Activated CD4-positive, alpha-beta T cell treated with anti-CD3 and anti-CD28 coated beads for 36 hours (primary cell): ENCODE measurements at regions of chr6 and their contacts with region 1.

Region 1: DNA sequence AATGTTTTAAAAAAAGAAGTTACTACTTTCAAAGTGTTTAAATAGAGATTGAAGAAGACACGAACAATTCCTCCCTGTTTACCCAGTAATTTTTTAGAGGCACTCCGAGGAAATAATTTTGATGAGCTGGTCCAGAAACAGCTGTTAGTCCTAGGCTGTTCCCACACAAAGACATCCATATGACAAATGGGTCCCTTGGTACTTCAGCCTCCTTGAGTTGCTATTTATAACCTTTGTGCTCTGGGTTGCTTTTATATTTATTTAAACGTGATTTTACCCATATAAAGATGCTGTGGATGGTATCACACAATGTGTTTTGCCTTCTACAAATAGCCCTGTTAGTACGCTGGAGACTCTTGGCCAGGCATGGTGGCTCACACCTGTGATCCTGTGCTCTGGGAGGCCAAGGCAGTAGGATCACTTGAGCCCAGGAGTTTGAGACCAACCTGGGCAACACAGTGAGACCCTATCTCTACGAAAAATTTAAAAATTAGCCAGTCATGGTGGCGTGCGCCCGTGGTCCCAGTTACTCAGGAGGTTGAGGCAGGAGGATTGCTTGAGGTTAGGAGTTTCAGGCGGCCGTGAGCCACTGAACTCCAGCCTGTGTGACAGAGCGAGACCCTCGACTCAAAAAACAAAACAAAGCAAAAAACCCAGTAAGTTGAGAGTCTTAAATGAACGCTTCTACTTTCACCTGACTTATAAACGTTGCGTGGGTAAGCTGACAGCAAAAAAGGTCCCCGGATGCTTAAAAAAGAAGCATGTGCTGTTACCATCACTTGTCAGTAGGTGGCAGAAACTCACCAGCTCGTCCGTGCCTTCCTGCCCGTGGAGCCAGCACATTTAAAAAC is 56.9 kb upstream of the ARMH2 start:
- DNase-seq: peak; percentile 79
- ATAC-seq: peak; percentile 61
- H3K4me3 Mint-ChIP-seq: peak overlapping the region; percentile 46
- H3K27ac Mint-ChIP-seq: peak overlapping the region; percentile 90
- H3K4me1 Mint-ChIP-seq: peaks cover 52% of the 10 kb centered on the region
- H3K27me3 Mint-ChIP-seq: no peaks in the 10 kb centered on the region

Region 2: DNA sequence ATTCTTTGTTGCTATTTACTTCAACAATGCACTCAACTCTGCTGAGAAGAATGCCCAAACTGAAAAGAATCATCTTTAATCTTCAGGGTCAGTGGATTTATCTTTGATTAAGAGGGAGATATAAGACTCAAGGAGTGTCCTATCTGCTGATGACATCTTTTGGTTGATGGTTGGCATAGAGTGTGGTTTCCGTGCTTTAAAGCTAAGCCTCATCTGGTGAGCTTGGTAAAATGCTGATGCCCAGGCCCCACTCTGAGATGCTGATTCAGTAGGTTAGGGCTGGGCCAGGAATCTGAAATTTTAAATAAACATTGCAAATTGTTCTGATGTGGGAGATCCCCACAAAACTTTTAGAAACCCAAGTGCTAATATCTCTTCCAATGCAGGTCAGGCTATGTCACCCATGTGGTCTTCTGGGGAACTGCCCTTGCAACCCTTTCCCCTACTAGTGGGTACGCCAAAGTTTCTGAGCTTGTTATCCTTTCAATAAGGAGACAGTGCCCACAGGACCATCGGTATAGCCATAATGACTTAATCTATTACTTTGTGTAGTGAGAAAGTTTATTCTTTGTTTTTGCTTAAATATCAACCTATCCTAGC is 11.6 kb after region 1 on chr6:
- CTCF ChIA-PET with region 1: interaction called, 37 read pairs
- POLR2A ChIA-PET with region 1: no interaction called
- intact Hi-C with region 1: no loop called
- DNase-seq: no peak
- ATAC-seq: peak; percentile 43
- H3K4me3 Mint-ChIP-seq: no peak overlapping the region
- H3K27ac Mint-ChIP-seq: peak overlapping the region; percentile 74
- H3K4me1 Mint-ChIP-seq: peaks cover 69% of the 10 kb centered on the region
- H3K27me3 Mint-ChIP-seq: no peaks in the 10 kb centered on the region

Region 3: DNA sequence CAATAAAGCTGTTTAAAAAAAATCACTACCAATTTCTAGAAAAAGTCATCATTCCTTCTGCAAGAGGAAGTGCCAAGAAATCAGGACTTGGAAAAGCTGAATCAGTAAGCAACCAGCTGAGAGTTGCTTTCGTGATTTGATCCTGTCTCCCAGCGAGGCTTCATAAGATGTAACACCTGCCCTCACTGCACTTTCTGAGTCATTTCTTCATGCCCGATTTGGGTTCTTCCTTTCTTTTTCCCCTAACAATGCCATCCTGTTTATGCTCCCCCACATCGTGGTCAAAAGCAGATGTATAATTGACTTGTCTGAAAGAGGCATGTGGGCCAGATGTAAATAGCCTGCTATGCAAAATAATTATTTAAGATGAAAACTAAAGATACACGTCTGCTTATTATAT is 28.0 kb after region 1 on chr6:
- CTCF ChIA-PET with region 1: interaction called, 16 read pairs
- POLR2A ChIA-PET with region 1: no interaction called
- intact Hi-C with region 1: loop called (anchors 1 kb)
- DNase-seq: peak; percentile 69
- ATAC-seq: peak; percentile 85
- H3K4me3 Mint-ChIP-seq: peak overlapping the region; percentile 72
- H3K27ac Mint-ChIP-seq: peak overlapping the region; percentile 100
- H3K4me1 Mint-ChIP-seq: peaks cover 88% of the 10 kb centered on the region
- H3K27me3 Mint-ChIP-seq: no peaks in the 10 kb centered on the region

Region 4: DNA sequence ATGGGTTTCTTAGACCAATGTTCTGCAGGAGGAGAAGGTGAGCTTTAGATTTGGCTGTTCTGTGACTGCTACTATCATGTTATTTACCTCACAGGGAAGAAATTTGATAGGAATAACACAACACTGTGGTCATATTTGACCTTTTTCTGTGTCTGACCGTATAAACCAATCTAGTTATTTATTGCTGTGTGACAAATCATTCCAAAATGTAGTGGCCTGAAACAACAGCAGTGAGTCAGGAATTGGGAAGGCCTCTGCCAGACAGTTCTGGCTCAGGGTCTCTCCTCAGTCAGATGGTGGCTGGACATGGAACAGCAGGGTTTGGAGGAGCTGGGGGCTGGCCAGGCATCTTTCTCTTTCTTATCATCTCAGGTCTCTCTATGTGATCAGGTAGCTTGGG is 47.2 kb after region 1 on chr6:
- CTCF ChIA-PET with region 1: interaction called, 10 read pairs
- POLR2A ChIA-PET with region 1: interaction called, 5 read pairs
- intact Hi-C with region 1: no loop called
- DNase-seq: no peak
- ATAC-seq: no peak
- H3K4me3 Mint-ChIP-seq: no peak overlapping the region
- H3K27ac Mint-ChIP-seq: peak overlapping the region; percentile 78
- H3K4me1 Mint-ChIP-seq: peaks cover 92% of the 10 kb centered on the region
- H3K27me3 Mint-ChIP-seq: no peaks in the 10 kb centered on the region

Region 5: DNA sequence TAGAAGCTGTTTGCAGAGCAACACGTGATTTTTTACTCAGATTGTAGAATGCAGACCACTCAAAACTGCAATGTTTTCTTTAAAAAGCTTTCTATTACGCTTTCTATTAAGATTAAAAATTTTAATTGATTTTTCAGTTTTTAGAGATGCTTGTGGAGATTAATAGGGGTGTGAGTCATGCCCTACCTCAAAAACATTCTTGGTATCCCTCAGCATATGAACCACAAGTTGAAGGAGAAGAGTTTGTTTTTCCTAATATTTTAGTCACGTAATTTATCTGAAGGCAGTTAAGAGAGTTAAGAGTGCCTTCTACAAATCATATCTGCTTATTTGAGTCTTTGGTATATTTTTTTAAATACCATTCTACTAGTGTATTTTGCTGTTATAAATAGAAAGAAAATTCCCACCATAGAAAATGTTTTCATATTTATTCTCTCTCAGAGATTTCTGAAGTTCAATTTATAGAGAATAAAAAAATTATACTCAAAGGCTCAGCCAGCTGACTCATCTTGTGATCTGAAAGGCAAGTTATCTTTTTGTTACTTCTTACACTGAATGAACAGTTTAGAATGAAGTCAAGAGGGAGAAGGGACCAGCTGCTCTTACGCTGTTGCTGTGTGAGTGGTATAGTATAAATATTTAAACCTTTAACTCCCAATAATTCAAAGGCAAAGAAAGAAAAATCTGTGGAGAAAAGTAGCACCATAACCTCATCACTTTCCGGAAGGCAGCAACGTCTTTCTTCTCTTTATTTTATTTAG is 72.5 kb after region 1 on chr6:
- CTCF ChIA-PET with region 1: interaction called, 102 read pairs
- POLR2A ChIA-PET with region 1: interaction called, 5 read pairs
- intact Hi-C with region 1: loop called (anchors 1 to 2 kb)
- DNase-seq: no peak
- ATAC-seq: peak; percentile 15
- H3K4me3 Mint-ChIP-seq: peak overlapping the region; percentile 84
- H3K27ac Mint-ChIP-seq: peak overlapping the region; percentile 95
- H3K4me1 Mint-ChIP-seq: peaks cover 90% of the 10 kb centered on the region
- H3K27me3 Mint-ChIP-seq: no peaks in the 10 kb centered on the region

Region 6: DNA sequence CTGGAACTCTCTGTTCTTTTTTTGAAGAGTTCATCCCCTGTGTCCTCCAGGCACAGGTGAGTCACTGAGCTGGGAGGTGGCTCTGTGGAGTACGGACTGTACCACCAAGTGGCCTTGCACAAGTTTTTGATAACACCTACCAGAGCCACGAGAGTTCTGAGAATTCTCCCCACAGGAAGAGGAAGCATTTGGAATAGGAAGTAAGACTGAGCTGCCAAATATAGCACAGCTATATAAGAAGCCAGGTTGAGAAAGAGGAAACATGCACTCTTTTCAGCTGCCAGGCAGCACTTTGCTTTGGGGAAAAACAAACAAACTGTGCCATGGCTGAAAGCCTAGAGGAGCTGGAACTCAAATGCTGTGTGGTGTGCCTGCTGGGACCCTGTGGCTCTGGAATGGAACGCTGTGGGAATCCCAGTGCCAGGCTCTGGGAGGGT is 151.0 kb after region 1 on chr6:
- CTCF ChIA-PET with region 1: interaction called, 32 read pairs
- POLR2A ChIA-PET with region 1: no interaction called
- intact Hi-C with region 1: no loop called
- DNase-seq: peak; percentile 62
- ATAC-seq: peak; percentile 58
- H3K4me3 Mint-ChIP-seq: peak overlapping the region; percentile 32
- H3K27ac Mint-ChIP-seq: peak overlapping the region; percentile 79
- H3K4me1 Mint-ChIP-seq: peaks cover 83% of the 10 kb centered on the region
- H3K27me3 Mint-ChIP-seq: no peaks in the 10 kb centered on the region

Region 7: DNA sequence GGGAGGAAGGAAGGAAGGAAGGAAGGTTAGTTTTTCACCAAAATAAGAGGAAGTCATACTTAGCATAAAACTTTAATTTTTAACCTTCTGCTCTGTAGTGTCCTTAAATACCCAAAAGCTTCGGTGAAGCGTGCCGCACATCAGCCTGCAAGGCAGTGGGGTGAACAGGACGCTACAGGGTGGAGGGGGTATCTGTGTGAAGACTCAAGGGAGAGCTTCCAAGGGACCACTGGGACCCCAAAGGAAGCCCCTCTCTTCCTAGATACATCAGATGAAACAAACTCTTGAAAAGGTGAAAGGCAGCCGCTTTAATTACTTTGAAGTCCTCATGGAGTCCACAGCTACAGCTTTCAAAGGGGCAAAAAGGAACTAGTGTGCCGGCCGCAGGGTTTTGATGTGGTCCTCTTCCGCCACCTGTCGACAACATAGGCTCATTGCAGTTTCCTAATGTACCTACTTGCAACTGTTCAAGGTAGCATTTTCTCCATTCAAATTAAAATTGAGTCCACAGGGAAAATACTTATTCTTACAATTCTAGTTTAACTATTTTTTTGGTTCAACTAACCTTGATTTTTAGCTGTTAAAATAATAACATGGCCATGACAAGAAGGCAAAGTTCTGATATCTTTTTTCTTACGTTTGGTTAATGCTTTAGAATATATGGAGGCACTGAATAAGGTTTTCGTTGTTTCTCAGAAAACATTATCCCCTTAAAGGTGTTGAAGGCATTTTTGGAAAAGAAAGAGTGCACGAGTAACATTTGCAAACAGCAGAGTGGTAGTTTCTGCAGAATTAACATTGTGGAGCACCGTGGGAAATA is 215.1 kb after region 1 on chr6:
- CTCF ChIA-PET with region 1: interaction called, 31 read pairs
- POLR2A ChIA-PET with region 1: no interaction called
- intact Hi-C with region 1: loop called (anchors 1 kb)
- DNase-seq: peak; percentile 88
- ATAC-seq: peak; percentile 94
- H3K4me3 Mint-ChIP-seq: no peak overlapping the region
- H3K27ac Mint-ChIP-seq: peak overlapping the region; percentile 47
- H3K4me1 Mint-ChIP-seq: peaks cover 4% of the 10 kb centered on the region
- H3K27me3 Mint-ChIP-seq: no peaks in the 10 kb centered on the region